ENCODE measurements at regions of chr18 and their contacts with region 1.

Region 1: GRCh38 chr18:51110073-51110803 is 80.2 kb downstream of the SMAD4 start:
- DNase-seq: peak; percentile 58

Region 2: GRCh38 chr18:50830544-50830943 is 279.7 kb before region 1 on chr18:
- in situ Hi-C with region 1: no loop called
- DNase-seq: no peak

Region 3: GRCh38 chr18:51016903-51017879 is 93.0 kb before region 1 on chr18:
- in situ Hi-C with region 1: no loop called
- DNase-seq: no peak

Region 4: GRCh38 chr18:51029694-51030536 is 80.3 kb before region 1 on chr18 and contains the start of gene SMAD4:
- in situ Hi-C with region 1: no loop called
- DNase-seq: peak; percentile 96

Region 5: DNA sequence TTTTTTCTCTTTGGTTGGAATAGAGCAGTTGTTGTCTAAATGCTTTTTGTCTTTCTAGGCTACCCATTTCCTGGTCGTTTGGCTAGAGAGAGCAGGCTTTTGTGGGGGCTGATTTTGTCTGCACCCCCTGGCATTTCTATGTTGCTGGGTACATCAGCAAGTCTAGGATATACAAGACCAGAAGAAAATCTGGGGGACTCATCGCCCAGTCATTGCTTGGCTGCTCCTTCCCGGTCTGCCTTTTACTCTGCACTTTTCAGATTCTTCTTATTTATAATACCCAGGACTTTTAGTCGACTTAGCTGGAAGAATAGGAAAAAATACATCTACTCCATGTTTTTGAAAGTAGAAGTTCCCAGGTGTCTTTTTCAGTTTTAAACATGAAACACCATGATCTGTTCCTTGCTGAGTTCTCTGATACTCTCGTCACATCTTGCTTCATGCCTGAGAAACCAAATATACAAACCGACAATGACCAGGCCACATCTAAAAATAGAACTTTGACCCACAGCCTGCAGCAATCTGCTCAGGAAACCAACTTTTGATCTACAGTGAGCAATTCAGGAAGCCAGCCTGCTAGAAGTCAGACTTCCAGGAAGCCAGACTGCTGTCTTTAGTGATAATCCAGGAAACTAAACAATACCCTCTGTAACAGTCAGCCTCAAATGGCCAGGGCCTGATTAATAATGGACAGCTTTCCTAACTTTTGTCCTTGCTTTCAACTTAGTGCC is 251.1 kb after region 1 on chr18:
- in situ Hi-C with region 1: loop called (anchors 25 kb)
- DNase-seq: peak; percentile 36

Measured in KBM-7 (cell line).